H1 (cell line): ENCODE measurements at regions of chr13 and their contacts with region 1.

Region 1: DNA sequence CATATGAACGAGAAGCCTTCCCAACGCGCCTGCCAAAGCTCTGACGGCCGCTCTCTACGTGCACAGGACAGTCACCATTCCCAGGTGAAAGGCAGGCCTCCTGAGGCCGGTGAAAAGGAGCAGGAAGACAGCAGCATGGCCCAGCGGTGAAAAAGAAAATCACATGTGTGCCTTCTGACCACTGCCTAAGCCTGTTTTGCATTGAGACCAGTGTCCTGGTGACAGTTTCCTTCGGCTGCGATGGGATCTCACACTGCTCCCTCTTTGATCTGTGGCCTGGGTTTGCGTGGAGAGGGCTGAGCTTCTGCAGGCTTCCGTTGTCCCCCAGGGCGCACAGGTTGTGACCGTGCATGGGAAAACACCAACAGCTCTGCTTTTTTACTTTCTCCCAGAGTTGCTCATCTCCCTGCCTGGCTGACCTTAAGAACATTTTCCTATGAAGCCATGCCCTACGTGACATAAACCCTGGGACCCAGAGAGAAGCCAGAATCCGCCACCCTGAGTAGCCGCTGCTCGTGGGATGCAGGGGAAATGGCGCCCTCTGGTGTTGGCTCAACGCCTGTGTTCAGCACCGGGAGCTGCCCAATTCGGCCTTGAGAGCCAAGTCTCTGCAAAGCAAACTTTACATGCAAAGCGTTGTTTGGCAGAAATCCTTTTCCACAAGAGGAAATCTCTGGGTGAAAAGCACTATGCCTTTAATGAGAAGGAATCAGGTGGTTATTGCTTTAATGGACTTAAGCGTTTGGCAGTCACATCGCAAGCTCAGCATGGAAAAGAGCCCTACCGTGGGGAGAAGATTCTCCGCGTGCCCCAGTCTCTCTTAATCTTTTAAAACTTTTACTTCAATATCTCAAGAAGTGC is 112.2 kb upstream of the GPR12 start:
- DNase-seq: peak; percentile 43 to 92
- H3K4me3 ChIP-seq: no peak overlapping the region
- H3K27ac ChIP-seq: no peak overlapping the region
- H3K4me1 ChIP-seq: peaks cover 2 to 14% (median 5%) of the 10 kb centered on the region in 4 experiments; a peak in 4 of 7 replicates
- H3K27me3 ChIP-seq: 0 out of 7 replicates have a peak, but pooled peaks cover 0 to 2% (median 0%) of the 10 kb centered on the region in 4 experiments
- CTCF ChIP-seq: peak; percentile 88 to 96 (median 94)
- EP300 ChIP-seq: no peak
- POLR2A ChIP-seq: no peak
- RAD21 ChIP-seq: peak; percentile 91 to 96

Region 2: DNA sequence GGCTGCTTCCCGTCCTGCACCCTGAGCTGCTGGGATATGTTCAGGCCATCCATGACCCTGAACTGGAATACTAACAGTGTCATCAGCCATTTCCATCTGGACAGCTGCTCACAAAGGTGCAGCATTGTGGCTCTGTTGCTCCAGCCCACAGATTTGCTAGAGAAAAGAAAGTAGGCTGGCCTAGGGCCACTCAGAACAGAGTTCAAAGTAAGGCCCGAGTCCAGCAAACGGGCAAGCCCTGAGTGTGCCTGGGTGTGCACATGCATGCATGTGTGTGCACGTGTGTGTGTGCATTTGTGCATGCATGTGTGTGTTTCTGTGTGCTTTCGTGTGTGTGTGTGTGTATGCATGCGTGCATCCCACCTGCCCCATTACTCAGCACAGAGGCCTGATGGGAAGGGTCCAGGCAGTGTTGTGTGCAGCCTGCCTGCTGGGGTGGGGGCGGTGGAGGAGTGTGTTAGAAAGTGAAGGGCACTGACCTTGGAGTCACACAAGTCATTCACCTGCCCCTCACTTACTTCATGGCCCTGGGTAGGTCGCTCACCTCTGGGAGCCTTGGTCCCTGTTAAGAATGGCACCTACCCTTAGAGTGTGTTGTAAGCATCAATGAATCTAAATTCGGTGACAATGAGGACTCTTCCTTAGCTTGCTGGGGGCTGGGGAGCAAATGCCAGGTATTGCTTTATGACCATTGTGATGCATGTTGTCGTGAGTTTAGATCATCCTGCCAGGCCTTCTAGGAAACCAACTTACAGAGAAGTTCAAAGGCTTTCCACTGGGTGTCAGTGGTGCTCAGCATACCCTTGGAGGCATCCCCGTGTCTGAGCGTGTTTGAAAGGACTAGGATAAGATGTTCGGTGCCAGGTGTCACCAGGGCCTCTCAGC is 165.4 kb before region 1 on chr13:
- CTCF ChIA-PET with region 1: interaction called, 131 read pairs
- POLR2A ChIA-PET with region 1: no interaction called
- DNase-seq: peak in 1 of 2 experiments; percentile 41
- H3K4me3 ChIP-seq: no peak overlapping the region
- H3K27ac ChIP-seq: no peak overlapping the region
- H3K4me1 ChIP-seq: peaks cover 1 to 10% (median 4%) of the 10 kb centered on the region in 4 experiments; a peak in 5 of 7 replicates
- H3K27me3 ChIP-seq: no peaks in the 10 kb centered on the region
- CTCF ChIP-seq: peak; percentile 41 to 92 (median 81)
- EP300 ChIP-seq: no peak
- POLR2A ChIP-seq: no peak
- RAD21 ChIP-seq: peak; percentile 96 to 97

Region 3: DNA sequence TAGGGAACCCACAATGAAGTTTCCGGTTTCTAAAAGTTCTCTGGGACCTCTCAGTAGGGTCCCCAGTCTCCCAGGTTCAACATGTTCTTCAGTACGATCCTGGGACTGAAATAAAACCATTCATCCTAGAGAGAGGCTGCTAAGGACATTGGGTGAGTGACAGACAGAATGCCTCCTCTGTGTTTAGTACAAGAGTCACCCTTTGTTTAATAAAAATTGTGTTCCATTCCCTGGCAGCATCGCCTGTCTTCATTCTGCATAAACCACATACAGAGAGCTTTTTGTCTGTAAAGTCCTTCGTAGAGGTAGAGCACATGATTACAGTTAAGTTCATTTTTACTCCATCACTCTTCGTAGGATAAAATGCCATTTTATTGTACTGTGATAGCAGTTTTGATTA is 16.8 kb before region 1 on chr13:
- CTCF ChIA-PET with region 1: interaction called, 15 read pairs
- POLR2A ChIA-PET with region 1: no interaction called
- DNase-seq: no peak
- H3K4me3 ChIP-seq: no peak overlapping the region
- H3K27ac ChIP-seq: no peak overlapping the region
- H3K4me1 ChIP-seq: no peaks in the 10 kb centered on the region
- H3K27me3 ChIP-seq: no peaks in the 10 kb centered on the region
- CTCF ChIP-seq: no peak
- EP300 ChIP-seq: no peak
- POLR2A ChIP-seq: no peak
- RAD21 ChIP-seq: no peak

Region 4: DNA sequence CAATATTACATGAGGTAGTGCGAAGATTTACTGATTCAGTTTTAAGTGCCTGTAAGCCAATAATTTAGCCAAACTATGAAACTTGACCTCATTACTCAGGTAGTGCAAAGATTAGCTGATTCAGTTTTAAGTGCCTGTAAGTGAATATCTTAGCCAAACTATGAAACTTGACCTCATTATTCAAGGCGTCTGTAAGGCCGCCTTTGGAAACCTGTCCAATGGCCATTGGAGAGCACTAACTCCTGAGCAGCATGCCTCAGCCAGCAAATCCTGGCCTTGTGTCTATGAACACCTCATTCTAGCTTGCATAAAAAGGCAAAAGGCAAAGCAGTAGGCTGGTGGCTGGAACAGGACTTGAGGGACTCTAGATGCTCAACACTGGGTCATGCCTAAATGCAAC is 14.8 kb after region 1 on chr13:
- CTCF ChIA-PET with region 1: interaction called, 34 read pairs
- POLR2A ChIA-PET with region 1: interaction called, 3 read pairs
- DNase-seq: no peak
- H3K4me3 ChIP-seq: no peak overlapping the region
- H3K27ac ChIP-seq: no peak overlapping the region
- H3K4me1 ChIP-seq: no peaks in the 10 kb centered on the region
- H3K27me3 ChIP-seq: no peaks in the 10 kb centered on the region
- CTCF ChIP-seq: no peak
- EP300 ChIP-seq: no peak
- POLR2A ChIP-seq: no peak
- RAD21 ChIP-seq: no peak

Region 5: GRCh38 chr13:26929971-26930730 is 57.4 kb after region 1 on chr13:
- CTCF ChIA-PET with region 1: interaction called, 16 read pairs
- POLR2A ChIA-PET with region 1: interaction called, 3 read pairs
- DNase-seq: peak; percentile 56 to 96
- H3K4me3 ChIP-seq: peak overlapping the region in 3 of 4 experiments; percentile 20 to 51 (median 23); a peak in 4 of 8 replicates
- H3K27ac ChIP-seq: no peak overlapping the region
- H3K4me1 ChIP-seq: peaks cover 0 to 3% (median 0%) of the 10 kb centered on the region in 4 experiments; a peak in 1 of 7 replicates
- H3K27me3 ChIP-seq: no peaks in the 10 kb centered on the region
- CTCF ChIP-seq: peak; percentile 80 to 86 (median 84)
- EP300 ChIP-seq: no peak
- POLR2A ChIP-seq: no peak; a peak in 1 of 3 replicates
- RAD21 ChIP-seq: peak; percentile 88 to 95